MCF 10A (cell line): ENCODE measurements at regions of chr2 and their contacts with region 1.

Region 1: GRCh38 chr2:55050133-55050994 is at the start of gene RTN4:
- DNase-seq: peak; percentile 99
- H3K4me3 Mint-ChIP-seq: peak within 1 kb of the TSS; percentile 94
- H3K27ac Mint-ChIP-seq: peak within 1 kb of the TSS; percentile 99
- H3K4me1 Mint-ChIP-seq: peaks cover 24% of the 10 kb centered on the region
- H3K27me3 Mint-ChIP-seq: no peaks in the 10 kb centered on the region
- CTCF ChIP-seq: no peak
- total RNA-seq, gene RTN4: 389 and 391 TPM in 2 replicates

Region 2: DNA sequence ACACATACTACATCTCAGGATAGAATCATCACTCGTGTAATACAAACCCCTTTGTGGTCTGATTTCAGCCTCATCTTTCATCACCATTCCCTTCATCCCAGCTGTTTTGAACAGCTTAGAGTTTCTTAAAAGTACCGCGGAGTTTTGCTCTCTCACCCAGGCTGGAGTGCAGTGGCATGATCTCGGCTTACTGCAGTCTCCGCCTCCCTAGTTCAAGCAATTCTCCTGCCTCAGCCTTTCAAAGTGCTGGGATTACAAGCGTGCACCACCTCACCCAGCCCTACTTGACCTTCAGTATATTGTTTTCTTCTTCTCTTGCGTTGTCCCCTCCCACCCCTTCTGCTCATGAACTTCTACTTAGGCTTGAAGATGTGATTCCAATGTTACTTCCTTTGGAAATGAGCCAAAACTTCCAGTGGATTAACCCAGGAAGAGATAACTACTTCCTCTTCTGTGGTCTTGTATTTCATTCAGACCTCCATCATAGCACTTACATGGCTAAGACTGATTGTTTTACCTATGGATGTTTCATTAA is 1247.7 kb before region 1 on chr2:
- CTCF ChIA-PET with region 1: no interaction called
- POLR2A ChIA-PET with region 1: no interaction called
- intact Hi-C with region 1: no loop called
- DNase-seq: no peak
- H3K4me3 Mint-ChIP-seq: no peak overlapping the region
- H3K27ac Mint-ChIP-seq: no peak overlapping the region
- H3K4me1 Mint-ChIP-seq: no peaks in the 10 kb centered on the region
- H3K27me3 Mint-ChIP-seq: no peaks in the 10 kb centered on the region
- CTCF ChIP-seq: no peak

Region 3: GRCh38 chr2:54899576-54900200 is 150.7 kb before region 1 on chr2:
- CTCF ChIA-PET with region 1: interaction called, 21 read pairs
- POLR2A ChIA-PET with region 1: interaction called, 11 read pairs
- intact Hi-C with region 1: loop called (anchors 1 kb)
- DNase-seq: peak; percentile 72
- H3K4me3 Mint-ChIP-seq: no peak overlapping the region
- H3K27ac Mint-ChIP-seq: no peak overlapping the region
- H3K4me1 Mint-ChIP-seq: peaks cover 13% of the 10 kb centered on the region
- H3K27me3 Mint-ChIP-seq: no peaks in the 10 kb centered on the region
- CTCF ChIP-seq: peak; percentile 65

Region 4: GRCh38 chr2:55014962-55015939 is 35.1 kb before region 1 on chr2:
- CTCF ChIA-PET with region 1: interaction called, 30 read pairs
- POLR2A ChIA-PET with region 1: interaction called, 289 read pairs
- intact Hi-C with region 1: loop called (anchors 2 kb)
- DNase-seq: peak; percentile 82
- H3K4me3 Mint-ChIP-seq: peak overlapping the region; percentile 58
- H3K27ac Mint-ChIP-seq: peak overlapping the region; percentile 86
- H3K4me1 Mint-ChIP-seq: peaks cover 46% of the 10 kb centered on the region
- H3K27me3 Mint-ChIP-seq: no peaks in the 10 kb centered on the region
- CTCF ChIP-seq: peak; percentile 56

Region 5: GRCh38 chr2:55038428-55038827 is 11.9 kb before region 1 on chr2:
- CTCF ChIA-PET with region 1: interaction called, 7 read pairs
- POLR2A ChIA-PET with region 1: interaction called, 43 read pairs
- intact Hi-C with region 1: no loop called
- DNase-seq: no peak
- H3K4me3 Mint-ChIP-seq: no peak overlapping the region
- H3K27ac Mint-ChIP-seq: no peak overlapping the region
- H3K4me1 Mint-ChIP-seq: peaks cover 33% of the 10 kb centered on the region
- H3K27me3 Mint-ChIP-seq: no peaks in the 10 kb centered on the region
- CTCF ChIP-seq: no peak

Region 6: GRCh38 chr2:55099878-55100820 is 49.8 kb after region 1 on chr2:
- CTCF ChIA-PET with region 1: interaction called, 3 read pairs
- POLR2A ChIA-PET with region 1: interaction called, 22 read pairs
- intact Hi-C with region 1: loop called (anchors 1 kb)
- DNase-seq: peak; percentile 55
- H3K4me3 Mint-ChIP-seq: no peak overlapping the region
- H3K27ac Mint-ChIP-seq: peak overlapping the region; percentile 89
- H3K4me1 Mint-ChIP-seq: peaks cover 26% of the 10 kb centered on the region
- H3K27me3 Mint-ChIP-seq: no peaks in the 10 kb centered on the region
- CTCF ChIP-seq: no peak

Region 7: GRCh38 chr2:55168221-55169154 is 118.1 kb after region 1 on chr2:
- CTCF ChIA-PET with region 1: interaction called, 100 read pairs
- POLR2A ChIA-PET with region 1: interaction called, 104 read pairs
- intact Hi-C with region 1: loop called (anchors 1 kb)
- DNase-seq: peak; percentile 72
- H3K4me3 Mint-ChIP-seq: no peak overlapping the region
- H3K27ac Mint-ChIP-seq: no peak overlapping the region
- H3K4me1 Mint-ChIP-seq: peaks cover 13% of the 10 kb centered on the region
- H3K27me3 Mint-ChIP-seq: no peaks in the 10 kb centered on the region
- CTCF ChIP-seq: peak; percentile 81